ENCODE measurements at regions of chr5 and their contacts with region 1.

Region 1: GRCh38 chr5:142095651-142096330 is 12.8 kb upstream of the NDFIP1 start:
- DNase-seq: peak; percentile 68 to 95 (median 80)
- ATAC-seq: peak; percentile 87
- H3K4me3 ChIP-seq: no peak overlapping the region
- H3K4me3 Mint-ChIP-seq: peak overlapping the region; percentile 56
- H3K27ac ChIP-seq: peak overlapping the region; percentile 62 to 78
- H3K27ac Mint-ChIP-seq: peak overlapping the region; percentile 95
- H3K4me1 ChIP-seq: peaks cover 61% of the 10 kb centered on the region
- H3K4me1 Mint-ChIP-seq: peaks cover 57% of the 10 kb centered on the region
- H3K27me3 ChIP-seq: no peaks in the 10 kb centered on the region
- H3K27me3 Mint-ChIP-seq: no peaks in the 10 kb centered on the region
- CTCF ChIP-seq: no peak

Region 2: GRCh38 chr5:141650851-141651727 is 444.7 kb before region 1 on chr5 and contains the start of gene FCHSD1:
- CTCF ChIA-PET with region 1: no interaction called
- POLR2A ChIA-PET with region 1: no interaction called
- intact Hi-C with region 1: loop called in 1 of 2 experiments (anchors 2 kb)
- DNase-seq: peak; percentile 70 to 89 (median 81)
- ATAC-seq: peak; percentile 92
- H3K4me3 ChIP-seq: peak within 1 kb of the TSS; percentile 64
- H3K4me3 Mint-ChIP-seq: peak within 1 kb of the TSS; percentile 89
- H3K27ac ChIP-seq: peak within 1 kb of the TSS; percentile 63 to 73
- H3K27ac Mint-ChIP-seq: peak within 1 kb of the TSS; percentile 87
- H3K4me1 ChIP-seq: peaks cover 20% of the 10 kb centered on the region
- H3K4me1 Mint-ChIP-seq: peaks cover 52% of the 10 kb centered on the region
- H3K27me3 ChIP-seq: no peaks in the 10 kb centered on the region
- H3K27me3 Mint-ChIP-seq: no peaks in the 10 kb centered on the region
- CTCF ChIP-seq: no peak
- total RNA-seq, gene FCHSD1: 95.8 to 101 TPM

Region 3: GRCh38 chr5:141968914-141969608 is 126.7 kb before region 1 on chr5 and contains the start of gene RNF14:
- CTCF ChIA-PET with region 1: no interaction called
- POLR2A ChIA-PET with region 1: interaction called, 11 read pairs
- intact Hi-C with region 1: no loop called
- DNase-seq: peak; percentile 86 to 97 (median 92)
- ATAC-seq: peak; percentile 94
- H3K4me3 ChIP-seq: peak within 1 kb of the TSS; percentile 77 to 94
- H3K4me3 Mint-ChIP-seq: peak within 1 kb of the TSS; percentile 98
- H3K27ac ChIP-seq: peak within 1 kb of the TSS; percentile 80 to 97
- H3K27ac Mint-ChIP-seq: peak within 1 kb of the TSS; percentile 99
- H3K4me1 ChIP-seq: peaks cover 18% of the 10 kb centered on the region
- H3K4me1 Mint-ChIP-seq: peaks cover 27% of the 10 kb centered on the region
- H3K27me3 ChIP-seq: no peaks in the 10 kb centered on the region
- H3K27me3 Mint-ChIP-seq: no peaks in the 10 kb centered on the region
- CTCF ChIP-seq: peak; percentile 98
- total RNA-seq, gene RNF14: 11.3 to 12.8 TPM

Region 4: GRCh38 chr5:142024771-142025304 is 71.0 kb before region 1 on chr5:
- CTCF ChIA-PET with region 1: no interaction called
- POLR2A ChIA-PET with region 1: interaction called, 5 read pairs
- intact Hi-C with region 1: loop called in 1 of 2 experiments (anchors 1 kb)
- DNase-seq: peak; percentile 67 to 90 (median 84)
- ATAC-seq: peak; percentile 100
- H3K4me3 ChIP-seq: peak overlapping the region; percentile 43 to 51
- H3K4me3 Mint-ChIP-seq: peak overlapping the region; percentile 90
- H3K27ac ChIP-seq: peak overlapping the region; percentile 67 to 76
- H3K27ac Mint-ChIP-seq: peak overlapping the region; percentile 99
- H3K4me1 ChIP-seq: peaks cover 11% of the 10 kb centered on the region
- H3K4me1 Mint-ChIP-seq: peaks cover 16% of the 10 kb centered on the region
- H3K27me3 ChIP-seq: no peaks in the 10 kb centered on the region
- H3K27me3 Mint-ChIP-seq: no peaks in the 10 kb centered on the region
- CTCF ChIP-seq: no peak

Region 5: DNA sequence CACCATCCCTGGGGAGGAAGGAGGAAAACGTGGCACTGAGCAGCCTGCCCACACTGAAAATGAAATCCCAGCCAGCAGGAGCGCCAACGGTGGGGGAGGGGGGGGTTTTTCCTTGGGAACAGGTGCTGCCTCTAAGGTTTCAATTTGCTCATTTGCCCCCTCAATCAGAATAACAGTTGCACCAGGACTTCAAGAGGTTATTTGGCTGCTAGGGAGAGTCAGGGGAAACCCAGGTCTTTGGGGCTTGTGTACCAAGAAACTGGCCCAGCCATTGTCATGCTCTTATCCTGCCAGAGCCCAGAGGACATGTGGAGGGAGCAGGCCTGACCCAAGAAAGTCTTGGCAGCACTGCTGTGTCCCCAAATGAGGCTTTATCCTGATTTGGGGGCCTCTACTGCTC is 79.2 kb after region 1 on chr5:
- CTCF ChIA-PET with region 1: no interaction called
- POLR2A ChIA-PET with region 1: no interaction called
- intact Hi-C with region 1: no loop called
- DNase-seq: no peak
- ATAC-seq: no peak
- H3K4me3 ChIP-seq: no peak overlapping the region
- H3K4me3 Mint-ChIP-seq: no peak overlapping the region
- H3K27ac ChIP-seq: no peak overlapping the region
- H3K27ac Mint-ChIP-seq: no peak overlapping the region
- H3K4me1 ChIP-seq: no peaks in the 10 kb centered on the region
- H3K4me1 Mint-ChIP-seq: no peaks in the 10 kb centered on the region
- H3K27me3 ChIP-seq: no peaks in the 10 kb centered on the region
- H3K27me3 Mint-ChIP-seq: peaks cover 6% of the 10 kb centered on the region
- CTCF ChIP-seq: no peak

Region 6: DNA sequence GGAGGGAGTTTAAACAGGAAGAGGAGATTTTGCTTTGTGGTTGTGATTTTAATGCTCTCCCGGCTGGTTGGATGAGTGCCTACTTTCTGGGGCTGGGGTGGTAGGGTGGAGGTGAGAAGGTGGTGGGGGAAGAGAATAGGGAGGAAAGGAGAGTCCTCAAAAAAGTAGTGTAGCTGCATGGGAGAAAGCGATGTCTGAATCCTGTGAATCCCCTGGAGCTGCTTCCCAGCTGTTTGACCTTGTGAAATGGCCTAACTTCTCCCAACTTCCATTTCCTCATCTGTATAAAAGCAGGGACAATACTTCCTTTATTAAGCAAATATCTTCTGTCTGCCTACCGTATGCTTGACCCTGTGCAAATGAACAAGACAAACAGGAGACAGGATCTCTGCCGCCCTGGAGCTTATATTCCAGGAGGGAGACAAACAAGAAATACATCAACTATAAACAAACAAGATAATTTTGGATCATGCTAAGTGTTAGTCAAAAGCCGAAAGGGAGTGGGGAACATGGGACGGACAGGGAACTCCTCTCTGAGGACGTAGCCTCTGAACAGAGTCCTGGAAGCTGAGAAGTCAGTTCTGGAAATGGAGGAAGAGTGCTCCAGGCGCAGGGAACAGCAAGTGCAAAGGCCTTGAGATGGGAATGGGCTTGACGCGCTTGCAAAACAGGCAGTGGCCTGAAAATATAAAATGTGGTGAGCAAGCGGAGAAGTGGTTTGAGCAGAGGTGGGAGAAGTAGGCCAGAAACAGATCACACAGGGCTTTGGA is 125.5 kb after region 1 on chr5:
- CTCF ChIA-PET with region 1: no interaction called
- POLR2A ChIA-PET with region 1: no interaction called
- intact Hi-C with region 1: loop called in 1 of 2 experiments (anchors 10 kb)
- DNase-seq: no peak
- ATAC-seq: no peak
- H3K4me3 ChIP-seq: no peak overlapping the region
- H3K4me3 Mint-ChIP-seq: no peak overlapping the region
- H3K27ac ChIP-seq: no peak overlapping the region
- H3K27ac Mint-ChIP-seq: peak overlapping the region; percentile 18
- H3K4me1 ChIP-seq: peaks cover 27% of the 10 kb centered on the region
- H3K4me1 Mint-ChIP-seq: peaks cover 42% of the 10 kb centered on the region
- H3K27me3 ChIP-seq: peaks cover 0 to 2% of the 10 kb centered on the region in 2 experiments
- H3K27me3 Mint-ChIP-seq: peaks cover 16% of the 10 kb centered on the region
- CTCF ChIP-seq: no peak

Measured in CD8-positive, alpha-beta T cell (primary cell).